GM12878 (cell line): ENCODE measurements at regions of chr5 and their contacts with region 1.

Region 1: DNA sequence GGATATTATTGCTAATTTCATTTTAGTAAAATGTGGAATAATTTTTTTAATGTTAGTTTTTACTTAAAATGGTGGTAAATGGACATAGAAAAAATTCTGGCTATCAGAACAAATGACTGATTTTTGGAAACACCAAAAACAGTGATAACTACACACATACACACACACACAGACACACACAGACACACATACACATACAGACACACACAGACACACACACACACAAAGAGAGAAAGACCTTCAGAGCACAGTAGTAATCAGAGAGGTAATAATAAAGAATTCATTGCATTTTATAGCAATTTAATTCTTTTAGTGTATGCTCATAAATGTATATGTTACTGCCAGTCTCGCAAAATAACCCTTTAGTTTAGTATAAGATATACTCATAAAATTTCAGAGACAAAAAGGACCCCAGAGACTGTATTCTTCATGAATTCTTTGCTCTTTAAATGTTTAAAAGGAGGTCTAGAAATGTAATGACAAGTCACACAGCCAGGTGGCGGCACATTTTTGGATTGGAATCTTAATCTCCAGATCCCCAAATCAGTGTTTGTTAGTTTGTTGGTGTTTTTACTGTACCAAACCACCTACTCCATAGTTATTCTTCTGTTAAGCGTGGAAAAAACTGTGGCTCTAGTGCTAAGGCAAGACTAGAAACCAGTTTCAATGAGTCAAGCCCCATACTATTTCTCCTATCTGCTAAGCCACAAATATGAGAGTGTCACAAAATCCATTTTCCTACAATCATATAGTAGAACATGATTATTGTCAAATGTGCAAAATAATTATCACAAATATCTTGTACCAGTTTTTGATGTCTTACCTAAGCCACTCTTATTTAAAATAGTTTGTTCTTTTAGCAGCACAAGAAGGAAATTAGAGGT is 109.9 kb downstream of the EDIL3 start:
- DNase-seq: no peak
- ATAC-seq: peak; percentile 63
- H3K4me3 ChIP-seq: no peak overlapping the region
- H3K27ac ChIP-seq: no peak overlapping the region
- H3K4me1 ChIP-seq: no peaks in the 10 kb centered on the region
- H3K27me3 ChIP-seq: no peaks in the 10 kb centered on the region
- CTCF ChIP-seq: peak; percentile 46 to 55 (median 53); a peak in 5 of 6 replicates
- EP300 ChIP-seq: no peak
- POLR2A ChIP-seq: no peak
- RAD21 ChIP-seq: peak; percentile 56

Region 2: DNA sequence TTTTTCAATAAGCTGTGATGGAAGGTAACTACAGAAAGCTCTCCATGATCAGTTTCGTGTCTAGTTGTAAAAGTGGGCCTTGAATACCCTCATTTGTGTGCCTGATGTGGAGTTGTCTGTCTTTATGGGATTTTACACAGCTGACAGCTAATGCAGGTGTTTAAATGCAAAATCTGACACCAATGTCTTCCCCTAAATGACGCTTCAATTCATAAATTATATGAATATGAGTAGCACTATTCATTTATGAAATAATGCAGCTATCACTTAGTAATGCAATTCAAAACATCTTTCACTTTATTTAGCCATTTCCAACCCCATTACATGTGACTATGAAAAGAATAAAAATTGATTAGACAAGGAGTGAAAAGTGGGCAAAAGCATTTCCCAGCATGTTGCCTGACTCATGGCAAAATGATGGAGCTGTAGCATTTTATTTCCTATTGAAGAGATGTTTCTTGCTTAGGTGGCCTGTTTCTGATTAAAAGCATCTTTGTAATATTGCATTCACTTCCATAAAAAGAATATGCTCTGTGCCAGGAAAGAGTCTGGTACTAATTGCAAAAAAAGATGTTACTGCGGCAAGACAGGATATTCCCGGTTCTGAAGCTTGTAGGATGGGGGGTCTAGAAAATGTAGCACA is 437.4 kb before region 1 on chr5:
- CTCF ChIA-PET with region 1: no interaction called
- POLR2A ChIA-PET with region 1: no interaction called
- RAD21 ChIA-PET with region 1: no interaction called
- SMC1A ChIA-PET with region 1: no interaction called
- in situ Hi-C with region 1: no loop called
- intact Hi-C with region 1: no loop called
- DNase-seq: no peak
- ATAC-seq: no peak
- H3K4me3 ChIP-seq: no peak overlapping the region
- H3K27ac ChIP-seq: no peak overlapping the region
- H3K4me1 ChIP-seq: no peaks in the 10 kb centered on the region
- H3K27me3 ChIP-seq: no peaks in the 10 kb centered on the region
- CTCF ChIP-seq: no peak
- EP300 ChIP-seq: no peak
- POLR2A ChIP-seq: no peak
- RAD21 ChIP-seq: no peak

Region 3: GRCh38 chr5:84059672-84060071 is 215.2 kb before region 1 on chr5:
- CTCF ChIA-PET with region 1: no interaction called
- POLR2A ChIA-PET with region 1: no interaction called
- RAD21 ChIA-PET with region 1: no interaction called
- SMC1A ChIA-PET with region 1: no interaction called
- in situ Hi-C with region 1: no loop called
- intact Hi-C with region 1: no loop called
- DNase-seq: no peak
- ATAC-seq: no peak
- H3K4me3 ChIP-seq: no peak overlapping the region
- H3K27ac ChIP-seq: no peak overlapping the region
- H3K4me1 ChIP-seq: no peaks in the 10 kb centered on the region
- H3K27me3 ChIP-seq: no peaks in the 10 kb centered on the region
- CTCF ChIP-seq: no peak
- EP300 ChIP-seq: no peak
- POLR2A ChIP-seq: no peak
- RAD21 ChIP-seq: no peak

Region 4: GRCh38 chr5:84379749-84380148 is 104.9 kb after region 1 on chr5:
- CTCF ChIA-PET with region 1: interaction called, 5 read pairs
- POLR2A ChIA-PET with region 1: no interaction called
- RAD21 ChIA-PET with region 1: no interaction called
- SMC1A ChIA-PET with region 1: no interaction called
- in situ Hi-C with region 1: no loop called
- intact Hi-C with region 1: loop called (anchors 5 kb)
- DNase-seq: no peak
- ATAC-seq: no peak
- H3K4me3 ChIP-seq: no peak overlapping the region
- H3K27ac ChIP-seq: no peak overlapping the region
- H3K4me1 ChIP-seq: no peaks in the 10 kb centered on the region
- H3K27me3 ChIP-seq: peaks cover 9 to 12% of the 10 kb centered on the region in 2 experiments
- CTCF ChIP-seq: no peak
- EP300 ChIP-seq: no peak
- POLR2A ChIP-seq: no peak
- RAD21 ChIP-seq: no peak

Region 5: DNA sequence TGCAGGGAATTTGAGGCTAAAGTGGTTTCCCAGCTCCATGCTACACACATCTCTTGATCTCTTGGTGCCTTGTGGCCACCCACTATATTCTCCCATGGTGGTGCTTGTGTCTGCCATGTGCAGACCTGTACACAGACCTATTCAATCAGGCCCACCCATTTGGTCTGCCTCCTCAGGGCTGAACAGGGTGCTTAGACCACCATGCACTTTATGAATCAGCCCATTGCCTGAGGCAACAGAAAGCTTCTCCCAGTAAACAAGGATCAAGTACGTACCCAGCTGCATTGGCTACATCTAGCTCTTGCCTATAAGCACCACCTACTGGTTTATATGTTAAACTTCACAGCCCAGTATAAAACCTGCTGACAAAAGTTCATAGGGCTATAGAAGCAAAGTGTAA is 774.2 kb after region 1 on chr5:
- CTCF ChIA-PET with region 1: no interaction called
- POLR2A ChIA-PET with region 1: no interaction called
- RAD21 ChIA-PET with region 1: no interaction called
- SMC1A ChIA-PET with region 1: interaction called, 3 read pairs
- in situ Hi-C with region 1: no loop called
- intact Hi-C with region 1: loop called (anchors 1 kb)
- DNase-seq: no peak
- ATAC-seq: peak; percentile 91
- H3K4me3 ChIP-seq: no peak overlapping the region
- H3K27ac ChIP-seq: no peak overlapping the region
- H3K4me1 ChIP-seq: no peaks in the 10 kb centered on the region
- H3K27me3 ChIP-seq: no peaks in the 10 kb centered on the region
- CTCF ChIP-seq: peak in 2 of 3 experiments; percentile 36 to 48; a peak in 2 of 6 replicates
- EP300 ChIP-seq: no peak
- POLR2A ChIP-seq: no peak
- RAD21 ChIP-seq: peak; percentile 28; the same call in 1 of the 2 replicates